HCT116 (cell line): ENCODE measurements at regions of chr1 and their contacts with region 1.

Region 1: DNA sequence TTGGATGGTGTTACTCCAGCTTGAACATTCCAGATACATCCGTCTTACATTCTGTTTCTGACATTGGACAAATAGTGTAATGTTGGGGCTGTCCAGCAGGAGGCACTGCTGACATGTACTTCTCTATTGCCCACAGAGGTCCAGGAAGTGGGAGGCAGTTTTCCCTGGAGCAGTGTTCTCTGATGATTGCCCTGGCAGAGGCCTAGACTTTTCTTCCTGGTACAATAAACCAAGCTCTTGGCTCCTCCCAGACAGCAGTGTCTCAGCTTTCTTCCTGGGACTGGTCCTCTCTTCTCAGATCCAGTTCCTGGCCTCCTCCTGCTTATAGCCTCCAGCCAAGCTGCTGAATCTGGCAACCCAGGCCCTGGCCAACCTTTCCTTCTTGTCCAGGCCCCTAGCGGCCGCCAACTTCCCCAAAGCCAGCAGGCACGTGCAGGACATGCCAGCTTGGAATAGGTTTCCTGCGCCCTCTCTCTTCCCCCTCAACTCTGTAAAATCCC is 14.9 kb upstream of the IFNLR1 start:
- DNase-seq: peak; percentile 86
- ATAC-seq: peak; percentile 73
- H3K4me3 ChIP-seq: no peak overlapping the region
- H3K27ac ChIP-seq: peak overlapping the region; percentile 31; the same call in 1 of the 2 replicates
- H3K4me1 ChIP-seq: peaks cover 15 to 36% of the 10 kb centered on the region in 2 experiments
- H3K27me3 ChIP-seq: no peaks in the 10 kb centered on the region
- CTCF ChIP-seq: peak; percentile 69 to 97 (median 88)
- POLR2A ChIP-seq: no peak
- RAD21 ChIP-seq: peak; percentile 99

Region 2: GRCh38 chr1:24070821-24071393 is 131.1 kb before region 1 on chr1:
- CTCF ChIA-PET with region 1: interaction called, 19 read pairs
- POLR2A ChIA-PET with region 1: no interaction called
- RAD21 ChIA-PET with region 1: interaction called, 3 to 5 read pairs
- intact Hi-C with region 1: loop called (anchors 2 kb)
- DNase-seq: peak; percentile 77
- ATAC-seq: peak; percentile 95
- H3K4me3 ChIP-seq: no peak overlapping the region
- H3K27ac ChIP-seq: no peak overlapping the region
- H3K4me1 ChIP-seq: peaks cover 0 to 18% of the 10 kb centered on the region in 2 experiments; a peak in 2 of 4 replicates
- H3K27me3 ChIP-seq: no peaks in the 10 kb centered on the region
- CTCF ChIP-seq: peak; percentile 84 to 94 (median 88)
- POLR2A ChIP-seq: no peak
- RAD21 ChIP-seq: peak; percentile 96

Region 3: GRCh38 chr1:24186993-24187805 is 14.8 kb before region 1 on chr1 and contains the start of gene IFNLR1:
- CTCF ChIA-PET with region 1: interaction called, 11 read pairs
- POLR2A ChIA-PET with region 1: no interaction called
- RAD21 ChIA-PET with region 1: no interaction called
- intact Hi-C with region 1: no loop called
- DNase-seq: peak; percentile 58
- ATAC-seq: peak; percentile 95
- H3K4me3 ChIP-seq: peak within 1 kb of the TSS; percentile 51 to 62
- H3K27ac ChIP-seq: peak within 1 kb of the TSS; percentile 54; the same call in 1 of the 2 replicates
- H3K4me1 ChIP-seq: peaks cover 15 to 35% of the 10 kb centered on the region in 2 experiments; a peak in 3 of 4 replicates
- H3K27me3 ChIP-seq: no peaks in the 10 kb centered on the region
- CTCF ChIP-seq: no peak
- POLR2A ChIP-seq: peak; percentile 18
- RAD21 ChIP-seq: no peak
- total RNA-seq, gene IFNLR1: 7.6 TPM

Region 4: DNA sequence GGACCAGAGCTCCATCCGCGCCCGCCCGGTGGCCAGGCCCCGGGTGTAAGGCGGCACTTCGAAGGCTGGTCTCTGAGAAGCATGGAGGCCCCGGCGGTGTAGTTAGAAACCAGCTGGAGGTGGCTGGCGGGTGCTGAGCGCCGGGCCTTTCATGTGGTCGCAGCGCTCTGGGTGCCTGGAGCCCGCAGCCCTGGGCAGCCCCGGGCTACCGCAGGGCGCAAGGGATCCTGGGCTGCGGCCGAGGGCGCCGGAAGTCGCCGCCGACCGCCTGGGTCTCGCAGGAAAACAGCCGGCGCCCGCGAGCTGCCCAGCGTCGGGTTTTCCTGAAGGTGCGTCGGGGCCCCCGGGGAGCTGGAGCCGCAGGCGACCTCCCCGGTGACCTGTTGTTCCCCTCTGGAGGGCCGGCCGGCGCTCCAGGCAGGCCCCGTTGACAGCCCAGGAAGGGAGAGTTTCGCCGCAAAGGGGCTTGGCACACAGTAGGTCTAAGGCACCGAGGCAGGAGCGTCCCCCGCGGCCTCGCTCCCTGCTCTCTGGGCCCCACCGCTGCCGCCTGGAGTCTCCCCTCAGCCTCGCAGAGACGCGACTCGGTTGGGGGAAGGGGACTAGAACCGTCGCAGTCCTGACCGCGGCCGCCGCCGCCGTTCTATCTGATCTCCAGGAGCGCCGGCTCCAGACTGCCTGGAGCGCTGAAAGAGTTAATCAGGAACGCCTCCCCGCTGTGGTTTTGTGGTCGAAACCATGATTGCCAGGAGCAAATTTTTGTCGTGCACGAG is 119.9 kb after region 1 on chr1:
- CTCF ChIA-PET with region 1: interaction called, 13 read pairs
- POLR2A ChIA-PET with region 1: interaction called, 3 read pairs
- RAD21 ChIA-PET with region 1: interaction called, 3 read pairs
- intact Hi-C with region 1: loop called (anchors 5 kb)
- DNase-seq: peak; percentile 82
- ATAC-seq: peak; percentile 80
- H3K4me3 ChIP-seq: peak overlapping the region; percentile 49 to 63
- H3K27ac ChIP-seq: peak overlapping the region; percentile 61
- H3K4me1 ChIP-seq: peaks cover 44 to 92% of the 10 kb centered on the region in 2 experiments
- H3K27me3 ChIP-seq: peaks cover 73% of the 10 kb centered on the region
- CTCF ChIP-seq: no peak
- POLR2A ChIP-seq: no peak
- RAD21 ChIP-seq: peak; percentile 29

Region 5: DNA sequence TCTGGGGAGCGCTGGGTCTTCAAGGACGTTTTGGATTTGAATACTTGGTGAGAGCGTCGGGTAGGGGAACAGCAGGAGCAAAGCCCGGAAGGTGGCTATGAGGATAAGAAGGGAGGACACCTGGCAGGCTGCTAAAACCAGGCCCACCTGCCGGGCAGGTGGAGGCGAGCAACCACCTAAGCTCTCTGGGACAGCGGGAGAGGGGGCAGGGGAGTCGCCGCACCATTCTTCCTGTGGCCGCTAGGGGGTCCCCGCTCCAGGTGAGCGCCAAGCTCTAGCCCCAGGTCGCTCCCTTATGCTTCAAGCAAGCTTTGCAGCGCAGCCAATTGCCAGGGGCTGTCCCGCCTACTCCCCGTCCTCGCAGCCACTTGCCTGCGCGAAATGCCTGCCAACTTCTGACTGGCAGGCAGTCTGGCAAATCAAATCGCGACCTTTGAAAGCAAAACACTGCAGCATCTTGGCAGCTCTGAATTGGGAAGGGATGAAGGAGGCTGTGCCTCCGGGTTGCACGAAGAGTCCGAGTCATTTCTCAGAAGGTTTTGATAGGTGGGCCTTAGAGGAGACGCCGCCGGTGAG is 213.4 kb after region 1 on chr1 and contains the start of gene NIPAL3:
- CTCF ChIA-PET with region 1: interaction called, 12 read pairs
- POLR2A ChIA-PET with region 1: no interaction called
- RAD21 ChIA-PET with region 1: interaction called in 1 of 2 experiments, 3 read pairs
- intact Hi-C with region 1: no loop called
- DNase-seq: peak; percentile 99
- ATAC-seq: peak; percentile 90
- H3K4me3 ChIP-seq: peak within 1 kb of the TSS; percentile 87 to 88
- H3K27ac ChIP-seq: 0 out of 2 replicates have a peak within 1 kb of the TSS, but pooled peaks have one; percentile 26
- H3K4me1 ChIP-seq: peaks cover 40 to 79% of the 10 kb centered on the region in 2 experiments
- H3K27me3 ChIP-seq: no peaks in the 10 kb centered on the region
- CTCF ChIP-seq: peak; percentile 73 to 87 (median 80)
- POLR2A ChIP-seq: no peak
- RAD21 ChIP-seq: peak; percentile 79
- total RNA-seq, gene NIPAL3: 16.6 TPM

Region 6: DNA sequence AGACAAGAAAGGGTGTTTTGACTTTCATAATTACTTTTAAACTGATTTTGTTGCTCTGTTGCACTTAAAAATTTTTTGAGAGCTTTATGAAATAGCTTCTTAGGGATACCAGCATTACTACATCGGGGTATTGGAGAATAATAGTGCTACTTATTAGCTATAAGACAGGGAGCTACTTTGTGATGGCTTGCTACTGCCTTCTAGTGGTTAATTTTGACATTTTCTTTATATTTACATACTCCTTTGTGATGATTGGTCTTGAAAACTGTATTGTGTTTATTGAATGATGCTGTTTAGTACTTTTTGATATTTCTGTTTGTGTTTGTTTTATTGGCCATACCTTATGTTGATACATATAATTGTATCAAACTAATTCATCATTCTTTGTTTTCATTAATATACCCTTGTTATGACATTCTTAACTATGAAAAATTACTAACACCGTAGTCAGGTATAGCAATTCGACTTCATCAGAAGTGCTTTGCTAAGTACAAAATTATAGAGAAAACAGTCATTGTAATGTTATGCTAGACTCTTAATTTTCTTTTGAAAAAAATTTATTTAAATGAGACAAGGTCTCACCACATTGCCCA is 628.8 kb after region 1 on chr1:
- CTCF ChIA-PET with region 1: interaction called, 9 read pairs
- POLR2A ChIA-PET with region 1: no interaction called
- RAD21 ChIA-PET with region 1: interaction called in 1 of 2 experiments, 3 read pairs
- intact Hi-C with region 1: loop called (anchors 5 kb)
- DNase-seq: peak; percentile 68
- ATAC-seq: peak; percentile 84
- H3K4me3 ChIP-seq: no peak overlapping the region
- H3K27ac ChIP-seq: no peak overlapping the region
- H3K4me1 ChIP-seq: peaks cover 0 to 14% of the 10 kb centered on the region in 2 experiments; a peak in 2 of 4 replicates
- H3K27me3 ChIP-seq: no peaks in the 10 kb centered on the region
- CTCF ChIP-seq: peak; percentile 59 to 92 (median 82); a peak in 5 of 6 replicates
- POLR2A ChIP-seq: no peak
- RAD21 ChIP-seq: peak; percentile 92